ENCODE measurements at regions of chrX and their contacts with region 1.

Region 1: DNA sequence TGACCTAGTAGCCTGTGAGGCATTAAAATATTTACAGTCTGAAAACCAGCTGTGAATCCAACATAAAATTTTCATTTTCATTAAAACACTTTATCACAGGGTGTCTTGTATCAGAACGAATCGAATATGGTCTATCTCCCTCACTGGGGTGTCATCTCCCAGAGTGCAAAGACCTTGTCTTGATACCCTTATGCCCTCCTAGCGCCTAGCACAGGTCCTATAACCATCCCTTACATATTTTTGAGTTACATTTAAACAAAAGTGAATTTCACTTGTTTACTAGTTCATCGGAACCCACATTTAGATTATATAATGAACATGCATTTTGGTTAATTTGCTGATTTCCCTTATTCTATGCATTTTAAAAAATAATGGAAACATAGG is 14.0 kb downstream of the DIPK2B start:
- DNase-seq: no peak
- ATAC-seq: no peak
- H3K4me3 ChIP-seq: peak overlapping the region; percentile 71
- H3K27ac ChIP-seq: peak overlapping the region; percentile 88
- H3K4me1 ChIP-seq: peaks cover 15% of the 10 kb centered on the region
- H3K27me3 ChIP-seq: no peaks in the 10 kb centered on the region
- CTCF ChIP-seq: no peak

Region 2: DNA sequence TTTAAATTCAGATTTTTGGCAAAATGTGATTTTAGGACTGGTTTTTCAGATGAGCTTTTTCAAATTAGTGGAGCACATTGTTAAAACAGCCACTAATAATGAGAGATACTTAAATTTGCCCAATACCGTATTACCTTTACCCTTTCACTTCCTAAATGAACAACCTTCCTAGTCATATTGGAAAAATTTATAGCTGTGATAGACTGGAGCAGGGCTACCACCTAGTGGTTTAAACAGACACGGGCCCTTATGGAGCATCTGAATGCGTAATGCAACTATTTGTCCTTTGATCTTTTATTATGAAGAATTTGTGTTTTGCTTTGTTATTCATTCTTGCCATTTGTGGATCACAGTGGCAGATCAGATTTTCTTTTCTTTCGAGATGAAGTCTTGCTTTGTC is 240.9 kb before region 1 on chrX:
- CTCF ChIA-PET with region 1: no interaction called
- POLR2A ChIA-PET with region 1: no interaction called
- intact Hi-C with region 1: loop called (anchors 10 kb)
- DNase-seq: peak; percentile 67
- ATAC-seq: peak; percentile 55
- H3K4me3 ChIP-seq: no peak overlapping the region
- H3K27ac ChIP-seq: no peak overlapping the region
- H3K4me1 ChIP-seq: peaks cover 31% of the 10 kb centered on the region
- H3K27me3 ChIP-seq: no peaks in the 10 kb centered on the region
- CTCF ChIP-seq: peak; percentile 73

Region 3: GRCh38 chrX:45070116-45071007 is 116.3 kb before region 1 on chrX:
- CTCF ChIA-PET with region 1: no interaction called
- POLR2A ChIA-PET with region 1: no interaction called
- intact Hi-C with region 1: loop called (anchors 10 kb)
- DNase-seq: peak; percentile 68
- ATAC-seq: peak; percentile 43; the same call in 1 of the 2 replicates
- H3K4me3 ChIP-seq: no peak overlapping the region
- H3K27ac ChIP-seq: no peak overlapping the region
- H3K4me1 ChIP-seq: peaks cover 6% of the 10 kb centered on the region; the same call in 1 of the 2 replicates
- H3K27me3 ChIP-seq: no peaks in the 10 kb centered on the region
- CTCF ChIP-seq: peak; percentile 81

Region 4: GRCh38 chrX:45110494-45110893 is 76.1 kb before region 1 on chrX:
- CTCF ChIA-PET with region 1: no interaction called
- POLR2A ChIA-PET with region 1: no interaction called
- intact Hi-C with region 1: loop called (anchors 10 kb)
- DNase-seq: no peak
- ATAC-seq: no peak
- H3K4me3 ChIP-seq: no peak overlapping the region
- H3K27ac ChIP-seq: no peak overlapping the region
- H3K4me1 ChIP-seq: no peaks in the 10 kb centered on the region
- H3K27me3 ChIP-seq: no peaks in the 10 kb centered on the region
- CTCF ChIP-seq: no peak

Region 5: DNA sequence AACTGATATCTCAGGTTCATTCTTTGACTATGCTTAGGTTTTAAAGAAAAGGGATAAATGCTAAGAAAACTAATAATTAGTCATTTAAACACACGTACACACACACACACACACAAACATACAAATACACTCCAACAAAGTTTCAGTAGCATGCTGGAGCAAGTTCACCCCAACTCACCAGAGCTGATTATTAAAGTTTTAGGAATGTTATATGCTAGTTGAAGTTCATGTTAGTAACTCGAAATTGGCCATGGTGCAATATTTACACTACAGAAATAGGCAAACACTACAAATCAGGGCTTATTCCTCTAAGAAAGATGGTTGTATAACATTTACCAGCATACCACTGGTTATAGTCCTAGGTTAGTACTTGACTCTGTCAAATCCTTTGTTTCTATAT is 398.1 kb after region 1 on chrX:
- CTCF ChIA-PET with region 1: no interaction called
- POLR2A ChIA-PET with region 1: no interaction called
- intact Hi-C with region 1: no loop called
- DNase-seq: peak; percentile 29
- ATAC-seq: no peak
- H3K4me3 ChIP-seq: no peak overlapping the region
- H3K27ac ChIP-seq: no peak overlapping the region
- H3K4me1 ChIP-seq: no peaks in the 10 kb centered on the region
- H3K27me3 ChIP-seq: no peaks in the 10 kb centered on the region
- CTCF ChIP-seq: no peak

Measured in PC-3 (cell line).